ENCODE measurements at regions of chr7 and their contacts with region 1.

Region 1: DNA sequence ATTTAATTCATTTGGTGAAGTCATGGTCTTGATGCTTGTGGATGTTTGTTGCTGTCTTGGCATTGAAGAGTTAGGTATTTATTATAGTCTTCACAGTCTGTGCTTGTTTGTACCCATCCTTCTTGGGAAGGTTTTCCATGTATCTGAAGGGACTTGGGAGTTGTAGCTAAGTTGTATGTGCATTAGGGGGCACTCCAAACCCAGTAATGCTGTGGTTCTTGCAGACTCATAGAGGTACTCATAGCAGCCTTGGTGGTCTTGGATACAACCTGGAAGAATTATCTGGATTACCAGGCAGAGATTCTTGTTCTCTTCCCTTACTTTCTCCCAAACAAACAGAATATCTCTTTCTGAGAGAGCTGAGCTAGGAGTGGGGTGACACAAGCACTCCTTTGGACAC is 93.2 kb downstream of the ADCYAP1R1 start:
- DNase-seq: no peak
- ATAC-seq: no peak
- H3K4me3 Mint-ChIP-seq: no peak overlapping the region
- H3K27ac Mint-ChIP-seq: no peak overlapping the region
- H3K4me1 Mint-ChIP-seq: no peaks in the 10 kb centered on the region
- H3K27me3 Mint-ChIP-seq: peaks cover 11% of the 10 kb centered on the region

Region 2: GRCh38 chr7:31134246-31135188 is 10.8 kb before region 1 on chr7:
- CTCF ChIA-PET with region 1: interaction called, 10 read pairs
- POLR2A ChIA-PET with region 1: no interaction called
- DNase-seq: peak; percentile 64
- ATAC-seq: peak; percentile 78
- H3K4me3 Mint-ChIP-seq: no peak overlapping the region
- H3K27ac Mint-ChIP-seq: no peak overlapping the region
- H3K4me1 Mint-ChIP-seq: peaks cover 2% of the 10 kb centered on the region
- H3K27me3 Mint-ChIP-seq: peaks cover 2% of the 10 kb centered on the region

Region 3: GRCh38 chr7:31160941-31161340 is 15.6 kb after region 1 on chr7:
- CTCF ChIA-PET with region 1: no interaction called
- POLR2A ChIA-PET with region 1: no interaction called
- DNase-seq: no peak
- ATAC-seq: no peak
- H3K4me3 Mint-ChIP-seq: no peak overlapping the region
- H3K27ac Mint-ChIP-seq: no peak overlapping the region
- H3K4me1 Mint-ChIP-seq: no peaks in the 10 kb centered on the region
- H3K27me3 Mint-ChIP-seq: no peaks in the 10 kb centered on the region

Region 4: GRCh38 chr7:31175672-31176071 is 30.3 kb after region 1 on chr7:
- CTCF ChIA-PET with region 1: no interaction called
- POLR2A ChIA-PET with region 1: no interaction called
- DNase-seq: no peak
- ATAC-seq: no peak
- H3K4me3 Mint-ChIP-seq: no peak overlapping the region
- H3K27ac Mint-ChIP-seq: no peak overlapping the region
- H3K4me1 Mint-ChIP-seq: no peaks in the 10 kb centered on the region
- H3K27me3 Mint-ChIP-seq: peaks cover 2% of the 10 kb centered on the region

Measured in activated CD8-positive, alpha-beta T cell treated with anti-CD3 and anti-CD28 coated beads, Interleukin-2, amount 10 ng/mL, durations not matched to agents 7 days and 5 days (primary cell).